ENCODE measurements at regions of chr5 and their contacts with region 1.

Region 1: DNA sequence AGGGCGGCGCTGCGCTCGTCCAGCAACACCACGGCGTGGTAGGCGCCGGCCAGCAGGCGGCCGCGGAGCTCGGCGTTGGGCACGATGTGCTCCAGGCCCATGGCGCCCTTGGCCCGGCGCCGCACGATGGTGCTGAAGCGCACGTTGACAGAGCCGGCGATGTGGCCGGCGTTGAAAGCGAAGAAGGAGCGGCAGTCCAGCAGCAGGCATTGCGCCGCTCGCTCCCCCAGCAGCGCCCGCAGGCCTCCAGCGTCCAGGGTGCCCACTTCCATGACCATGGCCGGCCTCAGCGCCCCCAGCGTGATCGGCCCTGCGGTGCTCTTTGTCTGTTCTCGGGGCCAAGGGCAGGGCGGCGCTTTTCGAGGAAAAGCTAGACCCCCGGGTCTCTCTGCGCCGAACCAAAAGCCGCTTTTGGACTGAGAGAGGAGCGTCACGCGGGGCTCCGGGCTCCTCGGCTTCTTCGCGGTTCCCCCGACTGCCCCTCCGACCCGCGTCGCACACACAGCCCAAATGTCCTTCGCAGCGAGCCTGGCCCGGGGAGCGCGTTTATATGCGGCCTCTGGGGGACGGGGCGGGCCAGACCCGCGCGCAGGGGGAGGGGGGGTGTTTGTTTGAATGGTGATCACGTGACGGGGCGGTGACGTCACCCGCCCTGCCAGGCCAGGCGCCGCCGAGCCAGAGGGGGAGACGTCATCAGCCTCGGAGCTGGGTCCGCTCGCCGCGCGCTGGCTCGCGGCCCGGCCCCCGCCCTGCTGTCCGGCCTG is at the start of gene DUSP1:
- DNase-seq: peak; percentile 99

Region 2: DNA sequence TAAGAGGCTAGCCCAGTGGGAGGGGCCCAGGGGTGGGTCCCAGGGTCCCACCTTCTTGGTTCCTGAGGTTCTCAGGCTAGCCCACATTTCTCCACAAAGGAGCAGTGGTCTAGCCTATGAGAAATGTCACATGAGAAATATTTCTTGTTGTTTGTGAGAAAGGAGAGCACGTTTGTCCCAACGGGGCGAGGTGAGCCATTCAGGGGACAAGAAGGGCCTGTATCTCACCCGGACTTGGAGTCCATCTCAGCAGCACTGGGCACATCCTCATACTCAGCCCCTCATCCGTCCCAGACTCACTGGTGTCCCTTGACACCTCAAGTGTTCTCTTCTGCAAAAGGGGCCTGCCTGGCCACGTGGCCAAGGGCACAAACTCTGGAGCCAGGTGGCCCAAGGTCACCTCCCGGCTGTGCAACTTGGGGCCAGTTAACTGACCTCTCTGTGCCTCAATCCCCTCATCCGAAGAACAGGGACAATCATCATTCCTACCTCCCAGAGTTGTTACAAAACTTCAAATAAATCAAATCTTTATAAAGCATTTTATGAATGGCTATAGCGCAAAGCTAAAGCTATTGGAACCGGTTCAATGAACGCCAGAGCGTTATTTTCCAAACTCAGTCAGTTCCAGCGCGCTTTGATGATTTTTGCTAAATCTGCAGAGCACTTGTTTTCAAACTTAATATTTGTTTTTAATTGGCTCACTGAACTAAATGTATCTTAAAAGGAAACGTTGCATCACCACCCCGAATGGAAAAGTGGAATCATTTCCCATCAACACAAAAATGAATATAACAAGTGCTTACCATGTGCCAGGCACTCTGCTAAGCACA is 49.3 kb before region 1 on chr5:
- CTCF ChIA-PET with region 1: interaction called, 10 read pairs
- POLR2A ChIA-PET with region 1: interaction called, 28 read pairs
- DNase-seq: no peak

Region 3: GRCh38 chr5:172733131-172733973 is 37.5 kb before region 1 on chr5:
- CTCF ChIA-PET with region 1: interaction called, 6 read pairs
- POLR2A ChIA-PET with region 1: interaction called, 32 read pairs
- DNase-seq: no peak

Region 4: DNA sequence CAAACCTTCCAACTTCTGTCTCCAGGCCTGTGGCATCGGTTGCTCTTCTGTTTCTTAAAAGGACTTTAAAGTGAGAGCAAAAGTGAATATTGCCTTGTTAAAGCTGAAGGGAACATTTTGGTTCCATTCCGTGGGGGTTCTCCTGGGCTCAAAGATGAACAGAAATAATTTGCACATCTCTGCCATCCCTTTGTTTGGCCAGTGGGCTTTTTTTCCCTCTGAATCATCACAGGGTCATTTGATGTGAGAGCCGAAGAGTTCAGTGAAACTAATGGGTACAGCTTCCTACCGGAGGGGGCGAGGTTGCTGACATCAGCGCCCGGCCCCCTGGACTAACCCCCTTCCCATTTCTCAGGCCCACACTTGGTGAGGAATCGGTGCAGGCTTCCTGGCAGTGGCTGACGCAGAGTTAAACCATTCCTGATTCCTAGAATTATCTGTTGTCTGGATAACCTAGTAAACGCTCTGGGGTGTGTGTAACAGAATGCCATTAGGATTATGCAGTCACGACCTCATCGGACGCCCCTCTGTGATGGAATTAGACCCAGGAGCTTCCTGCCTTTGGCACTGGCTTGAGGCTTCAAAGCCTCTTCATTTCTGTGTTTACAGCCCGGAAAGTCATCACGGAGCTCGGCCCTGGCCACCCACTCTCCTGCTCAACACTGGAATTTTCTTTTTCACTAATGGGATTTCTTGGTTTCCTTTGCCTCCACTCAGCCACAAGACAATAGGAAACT is 126.8 kb after region 1 on chr5:
- CTCF ChIA-PET with region 1: interaction called, 4 read pairs
- POLR2A ChIA-PET with region 1: interaction called, 17 read pairs
- DNase-seq: no peak

Region 5: DNA sequence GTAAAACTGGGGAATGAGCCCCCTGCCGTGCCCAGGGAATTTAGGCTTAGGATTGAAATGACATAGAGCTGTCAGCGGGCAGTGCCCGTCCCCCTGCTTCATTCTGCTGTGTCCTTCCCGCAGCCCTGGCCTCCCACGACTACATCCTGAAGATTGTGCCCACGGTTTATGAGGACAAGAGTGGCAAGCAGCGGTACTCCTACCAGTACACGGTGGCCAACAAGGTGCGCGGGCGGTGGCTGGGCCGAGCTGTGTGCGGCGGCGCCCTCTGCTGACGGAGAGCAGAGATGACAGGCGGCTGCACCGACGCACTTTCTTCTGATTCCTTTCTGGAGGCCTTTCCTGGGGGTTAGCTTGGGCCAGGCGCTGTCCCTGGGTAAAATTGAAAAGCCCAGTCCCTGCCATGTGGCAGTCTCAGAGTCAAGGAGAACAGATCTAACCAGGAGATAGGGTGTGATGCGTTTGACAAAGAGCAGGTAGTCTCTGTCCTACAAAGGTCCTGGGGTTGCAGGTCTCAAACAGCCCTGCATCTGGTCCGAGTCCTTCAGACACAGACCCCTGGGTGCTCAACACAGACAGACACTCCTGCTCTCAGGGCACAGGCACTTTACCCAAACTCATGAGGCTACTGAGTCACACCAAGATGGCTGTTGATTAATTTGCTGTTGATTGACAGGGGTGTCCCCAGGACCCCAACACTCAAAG is 161.6 kb after region 1 on chr5:
- CTCF ChIA-PET with region 1: interaction called, 3 read pairs
- POLR2A ChIA-PET with region 1: interaction called, 11 read pairs
- DNase-seq: peak; percentile 89

Measured in HEK293T (cell line).